ENCODE measurements at regions of chr4 and their contacts with region 1.

Region 1: DNA sequence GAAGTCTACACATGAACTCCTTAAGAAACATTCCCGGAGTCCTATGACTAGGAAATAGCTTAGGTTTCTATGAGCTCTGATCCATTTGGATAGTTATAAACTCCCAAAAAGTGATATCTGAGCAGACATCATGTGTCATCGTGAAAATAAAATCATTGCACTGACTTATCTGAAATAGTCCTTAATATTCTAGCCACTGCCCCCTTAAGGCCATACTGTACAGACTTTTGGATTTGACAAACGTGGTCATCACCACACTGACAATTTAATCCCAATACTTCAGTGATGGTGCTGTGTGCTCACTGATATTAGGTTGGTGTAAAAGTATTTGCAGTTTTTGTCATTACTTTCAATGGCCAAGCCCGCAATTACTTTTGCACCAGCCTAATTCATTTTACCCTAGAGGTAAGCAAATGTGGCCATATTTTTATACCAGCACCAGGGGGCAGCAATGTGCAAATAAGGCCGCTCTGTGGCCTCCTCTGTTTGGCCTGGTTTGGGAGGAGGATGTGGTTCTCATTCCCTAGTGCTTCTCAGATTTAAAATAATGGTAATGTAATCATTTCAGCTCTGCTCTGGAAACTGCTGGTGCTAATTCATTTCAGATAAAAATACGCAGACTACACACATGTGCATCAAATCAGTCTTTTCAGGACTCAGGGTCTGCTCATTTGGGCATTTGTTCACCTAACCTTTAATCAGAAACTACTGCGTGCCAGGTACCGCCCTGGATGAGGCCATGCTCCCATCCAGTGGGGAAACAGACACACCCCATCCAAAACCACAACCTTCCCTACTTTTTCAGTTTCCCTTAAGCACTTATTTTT is 196.4 kb upstream of the C1QTNF7 start:
- DNase-seq: peak; percentile 80
- H3K4me3 ChIP-seq: no peak overlapping the region
- H3K27ac ChIP-seq: peak overlapping the region in 1 of 4 donors; percentile 28
- H3K4me1 ChIP-seq: peaks cover 4 to 21% (median 7%) of the 10 kb centered on the region in 4 donors
- H3K27me3 ChIP-seq: no peaks in the 10 kb centered on the region
- CTCF ChIP-seq: peak; percentile 61 to 71 (median 66)
- EP300 ChIP-seq: no peak
- POLR2A ChIP-seq: no peak

Region 2: DNA sequence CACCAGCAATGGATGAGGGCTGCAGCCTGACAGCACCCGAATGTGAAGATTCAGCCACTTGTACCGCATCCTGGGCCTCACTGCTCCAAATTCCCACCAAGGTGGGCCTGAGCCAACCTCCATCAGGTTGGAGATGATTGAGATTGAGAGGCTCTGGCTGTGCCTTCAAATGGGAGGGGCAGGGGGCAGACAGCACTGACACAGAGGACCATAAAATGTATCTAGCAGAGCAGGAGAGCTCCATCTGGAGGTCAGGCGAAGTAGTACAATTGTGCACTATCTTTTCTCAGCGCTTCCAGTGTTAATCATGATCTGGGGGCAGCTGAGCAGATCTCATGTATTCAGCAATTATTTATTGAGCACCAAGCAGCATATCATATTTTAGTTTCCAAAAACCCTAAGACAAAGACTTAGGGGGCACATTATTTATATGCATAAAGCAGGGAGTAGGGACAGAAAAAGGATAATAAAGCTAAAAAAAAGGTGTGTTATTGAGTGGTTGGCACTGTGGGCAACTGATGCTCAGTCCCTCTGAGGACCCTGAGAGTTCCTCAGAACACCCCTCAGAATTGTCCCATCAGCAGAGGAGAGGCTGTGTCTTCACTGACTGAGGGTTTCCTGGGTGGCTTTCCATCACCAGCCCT is 164.8 kb after region 1 on chr4:
- in situ Hi-C with region 1: loop called in 1 of 4 experiments (anchors 10 kb)
- intact Hi-C with region 1: no loop called
- DNase-seq: peak; percentile 44
- H3K4me3 ChIP-seq: no peak overlapping the region
- H3K27ac ChIP-seq: no peak overlapping the region
- H3K4me1 ChIP-seq: peaks cover 0 to 14% (median 9%) of the 10 kb centered on the region in 4 donors
- H3K27me3 ChIP-seq: no peaks in the 10 kb centered on the region
- CTCF ChIP-seq: peak; percentile 55 to 69 (median 66)
- EP300 ChIP-seq: no peak
- POLR2A ChIP-seq: no peak

Region 3: GRCh38 chr4:15610855-15611254 is 379.4 kb after region 1 on chr4:
- in situ Hi-C with region 1: no loop called
- intact Hi-C with region 1: no loop called
- DNase-seq: no peak
- H3K4me3 ChIP-seq: no peak overlapping the region
- H3K27ac ChIP-seq: no peak overlapping the region
- H3K4me1 ChIP-seq: no peaks in the 10 kb centered on the region
- H3K27me3 ChIP-seq: no peaks in the 10 kb centered on the region
- CTCF ChIP-seq: no peak
- EP300 ChIP-seq: no peak
- POLR2A ChIP-seq: no peak

Region 4: DNA sequence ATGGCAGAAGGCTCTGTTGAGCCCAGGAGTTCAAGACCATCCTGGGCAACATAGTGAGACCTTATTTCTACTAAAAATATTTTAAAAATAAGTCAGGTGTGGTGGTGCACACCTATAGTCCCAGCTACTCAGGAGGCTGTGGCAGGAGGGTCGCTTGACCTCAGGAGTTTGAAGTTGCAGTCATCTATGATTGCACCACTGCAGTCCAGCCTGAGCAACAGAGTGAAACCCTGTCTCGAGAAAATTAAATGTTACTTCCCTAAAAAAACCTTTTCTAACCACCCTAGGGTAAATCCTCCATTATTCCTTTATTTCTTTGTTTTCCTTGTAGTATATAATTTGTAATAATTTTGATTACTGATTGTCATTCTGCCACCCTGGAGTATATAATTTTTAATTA is 458.1 kb after region 1 on chr4:
- in situ Hi-C with region 1: no loop called
- intact Hi-C with region 1: loop called (anchors 5 kb)
- DNase-seq: no peak
- H3K4me3 ChIP-seq: no peak overlapping the region
- H3K27ac ChIP-seq: no peak overlapping the region
- H3K4me1 ChIP-seq: peaks cover 0 to 8% (median 2%) of the 10 kb centered on the region in 4 donors
- H3K27me3 ChIP-seq: no peaks in the 10 kb centered on the region
- CTCF ChIP-seq: no peak
- EP300 ChIP-seq: no peak
- POLR2A ChIP-seq: no peak

Region 5: DNA sequence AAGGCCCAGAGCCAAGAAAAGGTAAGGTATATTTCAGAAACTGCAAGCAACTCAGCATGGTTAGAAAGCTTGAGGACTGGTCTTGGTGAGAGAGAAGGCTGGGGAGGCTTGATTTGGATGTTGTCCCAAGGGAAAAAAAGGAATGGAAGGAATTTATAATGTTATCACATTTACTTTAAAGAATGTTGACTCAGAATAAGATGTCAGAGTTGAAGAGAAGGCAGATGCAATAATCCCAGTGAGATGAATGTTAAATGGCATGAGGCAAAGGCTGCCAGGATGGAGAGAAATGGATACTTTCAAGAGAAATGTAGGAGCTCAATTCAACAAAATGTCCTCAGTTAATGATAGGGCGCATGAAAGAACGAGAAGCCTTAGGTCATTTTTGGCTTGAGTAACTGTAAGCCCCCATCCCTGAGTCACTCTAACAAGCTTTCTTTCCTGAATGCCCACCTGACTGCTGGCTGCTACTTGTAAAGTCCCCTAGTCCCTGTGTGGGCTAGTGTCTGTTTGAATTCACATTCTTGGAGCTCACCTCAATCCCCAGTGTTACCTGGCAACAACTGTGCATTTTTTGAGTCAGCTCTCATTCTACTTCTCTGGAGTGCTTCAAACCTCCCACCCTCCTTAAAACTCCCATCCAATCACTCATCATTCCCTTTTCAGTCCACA is 1097.8 kb after region 1 on chr4:
- in situ Hi-C with region 1: no loop called
- intact Hi-C with region 1: no loop called
- DNase-seq: no peak
- H3K4me3 ChIP-seq: no peak overlapping the region
- H3K27ac ChIP-seq: no peak overlapping the region
- H3K4me1 ChIP-seq: no peaks in the 10 kb centered on the region
- H3K27me3 ChIP-seq: no peaks in the 10 kb centered on the region
- CTCF ChIP-seq: no peak
- EP300 ChIP-seq: no peak
- POLR2A ChIP-seq: no peak

Measured in transverse colon (tissue), 4 donors.